IMR-90 (cell line): ENCODE measurements at regions of chr20 and their contacts with region 1.

Region 1: GRCh38 chr20:54078296-54078984 is 8.0 kb upstream of the BCAS1 start:
- DNase-seq: no peak
- ATAC-seq: no peak
- H3K4me3 ChIP-seq: no peak overlapping the region
- H3K27ac ChIP-seq: no peak overlapping the region
- H3K4me1 ChIP-seq: no peaks in the 10 kb centered on the region
- H3K27me3 ChIP-seq: peaks cover 2% of the 10 kb centered on the region; the same call in 1 of the 2 replicates
- CTCF ChIP-seq: no peak
- POLR2A ChIP-seq: no peak
- RAD21 ChIP-seq: no peak

Region 2: DNA sequence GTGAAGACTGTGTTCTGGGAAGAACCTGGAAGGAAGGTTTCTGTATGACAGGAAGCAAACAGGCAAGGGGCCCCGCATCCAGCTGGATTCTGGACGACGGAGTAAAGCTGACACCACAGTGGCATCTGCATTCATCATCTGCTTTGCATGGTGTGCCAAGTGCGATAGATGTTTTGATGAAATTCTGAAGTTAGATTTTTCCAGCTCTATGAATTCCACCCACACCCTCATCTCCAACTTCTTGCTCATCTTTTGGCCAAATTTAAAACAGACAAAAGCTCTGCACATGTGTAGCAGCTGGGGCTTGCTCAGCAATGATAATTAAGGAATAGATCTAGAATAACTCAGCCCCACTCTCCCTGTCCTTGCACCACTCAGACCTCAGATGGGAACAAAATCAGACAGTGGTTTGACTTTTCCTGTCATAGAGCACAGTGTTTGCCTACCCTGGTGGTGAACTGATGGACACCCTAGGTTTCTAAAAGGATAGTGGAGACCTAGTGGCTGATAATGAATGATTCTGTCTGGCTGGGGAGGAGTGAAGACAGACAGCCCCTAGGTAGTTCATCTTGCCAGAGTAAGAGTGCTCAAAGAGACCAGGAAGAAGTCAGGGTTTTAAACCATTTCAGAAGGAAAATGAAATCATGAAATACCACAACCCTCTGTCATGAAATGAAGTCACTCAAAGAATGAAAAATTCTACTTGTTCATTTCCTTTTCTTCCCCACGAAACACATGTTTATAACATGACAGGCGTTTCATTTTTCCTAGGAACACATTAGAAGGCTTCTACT is 93.9 kb before region 1 on chr20:
- CTCF ChIA-PET with region 1: no interaction called
- POLR2A ChIA-PET with region 1: no interaction called
- dilution Hi-C with region 1: no loop called
- in situ Hi-C with region 1: loop called (anchors 25 kb)
- intact Hi-C with region 1: no loop called
- DNase-seq: no peak
- ATAC-seq: no peak
- H3K4me3 ChIP-seq: no peak overlapping the region
- H3K27ac ChIP-seq: no peak overlapping the region
- H3K4me1 ChIP-seq: no peaks in the 10 kb centered on the region
- H3K27me3 ChIP-seq: peaks cover 4% of the 10 kb centered on the region
- CTCF ChIP-seq: no peak
- POLR2A ChIP-seq: no peak
- RAD21 ChIP-seq: no peak